K562 (cell line): ENCODE measurements at regions of chr1 and their contacts with region 1.

Region 1: GRCh38 chr1:100037927-100038659 is 68.3 kb downstream of the SLC35A3 start:
- DNase-seq: peak; percentile 88 to 93 (median 91)
- ATAC-seq: peak; percentile 88
- H3K4me3 ChIP-seq: peak overlapping the region; percentile 80
- H3K27ac ChIP-seq: peak overlapping the region; percentile 98
- H3K4me1 ChIP-seq: peaks cover 4 to 11% of the 10 kb centered on the region in 2 experiments; a peak in 4 of 5 replicates
- H3K27me3 ChIP-seq: no peaks in the 10 kb centered on the region
- CTCF ChIP-seq: no peak
- EP300 ChIP-seq: peak; percentile 26; the same call in 1 of the 2 replicates
- POLR2A ChIP-seq: peak; percentile 95
- RAD21 ChIP-seq: no peak

Region 2: GRCh38 chr1:99771513-99771918 is 266.6 kb before region 1 on chr1:
- CTCF ChIA-PET with region 1: no interaction called
- POLR2A ChIA-PET with region 1: no interaction called
- in situ Hi-C with region 1: no loop called
- intact Hi-C with region 1: loop called (anchors 2 kb)
- DNase-seq: peak; percentile 38 to 87 (median 47)
- ATAC-seq: peak; percentile 28
- H3K4me3 ChIP-seq: no peak overlapping the region
- H3K27ac ChIP-seq: peak overlapping the region; percentile 70
- H3K4me1 ChIP-seq: peaks cover 20 to 46% of the 10 kb centered on the region in 2 experiments
- H3K27me3 ChIP-seq: no peaks in the 10 kb centered on the region
- CTCF ChIP-seq: no peak
- EP300 ChIP-seq: peak; percentile 95
- POLR2A ChIP-seq: no peak
- RAD21 ChIP-seq: no peak

Region 3: GRCh38 chr1:99814373-99814900 is 223.7 kb before region 1 on chr1:
- CTCF ChIA-PET with region 1: no interaction called
- POLR2A ChIA-PET with region 1: interaction called, 3 read pairs
- in situ Hi-C with region 1: loop called (anchors 5 kb)
- intact Hi-C with region 1: no loop called
- DNase-seq: no peak
- ATAC-seq: peak; percentile 27; the same call in 1 of the 3 replicates
- H3K4me3 ChIP-seq: no peak overlapping the region
- H3K27ac ChIP-seq: no peak overlapping the region
- H3K4me1 ChIP-seq: peaks cover 0 to 3% of the 10 kb centered on the region in 2 experiments; a peak in 1 of 5 replicates
- H3K27me3 ChIP-seq: no peaks in the 10 kb centered on the region
- CTCF ChIP-seq: no peak
- EP300 ChIP-seq: no peak
- POLR2A ChIP-seq: no peak
- RAD21 ChIP-seq: no peak

Region 4: DNA sequence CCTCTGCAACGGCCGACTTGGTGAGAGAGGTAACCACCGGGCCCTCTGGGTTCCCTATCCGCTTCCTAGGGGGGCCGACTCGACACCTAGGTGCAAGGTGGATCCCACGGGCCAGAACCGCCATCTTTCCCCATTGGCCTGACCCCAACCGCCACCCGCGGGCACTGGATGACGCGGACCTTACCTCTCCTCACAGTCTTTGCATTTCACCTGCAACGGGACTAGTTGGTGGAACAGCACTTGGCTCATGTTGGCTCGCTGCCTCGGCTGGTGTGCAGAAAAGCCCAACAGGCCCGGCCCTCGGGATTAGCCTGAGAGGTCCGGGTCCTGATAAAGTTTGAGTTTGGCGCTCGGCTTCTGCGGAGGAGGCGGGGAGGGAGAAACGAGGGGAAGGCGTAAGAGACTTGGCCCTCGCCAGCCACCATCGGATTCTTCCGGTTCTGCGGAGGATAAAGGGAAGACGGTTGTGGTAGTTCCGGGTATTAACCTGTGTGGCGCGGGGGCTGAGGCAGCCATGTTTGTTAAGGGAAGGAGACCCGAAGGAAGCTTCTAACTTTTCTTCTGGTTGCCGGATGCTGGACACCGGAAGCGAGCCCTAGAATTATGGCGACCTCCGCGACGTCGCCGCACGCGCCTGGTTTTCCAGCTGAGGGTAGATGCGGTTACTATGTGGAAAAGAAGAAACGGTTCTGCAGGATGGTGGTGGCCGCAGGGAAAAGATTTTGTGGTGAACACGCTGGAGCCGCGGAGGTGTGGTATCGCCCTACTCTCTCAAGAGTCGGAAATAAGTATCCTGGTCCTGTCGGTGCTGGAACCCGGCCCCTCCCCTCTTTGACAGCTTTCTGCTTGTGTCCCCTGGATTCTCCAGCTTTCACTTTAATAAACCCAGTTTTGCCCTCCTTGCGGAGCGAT is 94.7 kb after region 1 on chr1 and contains the starts of genes SASS6 and TRMT13:
- CTCF ChIA-PET with region 1: no interaction called
- POLR2A ChIA-PET with region 1: no interaction called
- in situ Hi-C with region 1: no loop called
- intact Hi-C with region 1: loop called (anchors 2 kb)
- DNase-seq: peak; percentile 85 to 99 (median 88)
- ATAC-seq: peak; percentile 90
- H3K4me3 ChIP-seq: peak within 1 kb of the TSS; percentile 51
- H3K27ac ChIP-seq: peak within 1 kb of the TSS; percentile 79
- H3K4me1 ChIP-seq: peaks cover 3 to 10% of the 10 kb centered on the region in 2 experiments; a peak in 2 of 5 replicates
- H3K27me3 ChIP-seq: no peaks in the 10 kb centered on the region
- CTCF ChIP-seq: no peak
- EP300 ChIP-seq: peak; percentile 79
- POLR2A ChIP-seq: peak; percentile 84
- RAD21 ChIP-seq: no peak; a peak in 1 of 4 replicates
- polyA plus RNA-seq, gene SASS6: 14.7 to 16.4 TPM
- polyA plus RNA-seq, gene TRMT13: 24.2 to 24.3 TPM

Region 5: GRCh38 chr1:100292711-100293110 is 254.6 kb after region 1 on chr1:
- CTCF ChIA-PET with region 1: no interaction called
- POLR2A ChIA-PET with region 1: no interaction called
- in situ Hi-C with region 1: no loop called
- intact Hi-C with region 1: no loop called
- DNase-seq: no peak
- ATAC-seq: no peak
- H3K4me3 ChIP-seq: no peak overlapping the region
- H3K27ac ChIP-seq: no peak overlapping the region
- H3K4me1 ChIP-seq: no peaks in the 10 kb centered on the region; a peak in 1 of 5 replicates
- H3K27me3 ChIP-seq: no peaks in the 10 kb centered on the region
- CTCF ChIP-seq: no peak
- EP300 ChIP-seq: no peak
- POLR2A ChIP-seq: no peak
- RAD21 ChIP-seq: no peak

Region 6: DNA sequence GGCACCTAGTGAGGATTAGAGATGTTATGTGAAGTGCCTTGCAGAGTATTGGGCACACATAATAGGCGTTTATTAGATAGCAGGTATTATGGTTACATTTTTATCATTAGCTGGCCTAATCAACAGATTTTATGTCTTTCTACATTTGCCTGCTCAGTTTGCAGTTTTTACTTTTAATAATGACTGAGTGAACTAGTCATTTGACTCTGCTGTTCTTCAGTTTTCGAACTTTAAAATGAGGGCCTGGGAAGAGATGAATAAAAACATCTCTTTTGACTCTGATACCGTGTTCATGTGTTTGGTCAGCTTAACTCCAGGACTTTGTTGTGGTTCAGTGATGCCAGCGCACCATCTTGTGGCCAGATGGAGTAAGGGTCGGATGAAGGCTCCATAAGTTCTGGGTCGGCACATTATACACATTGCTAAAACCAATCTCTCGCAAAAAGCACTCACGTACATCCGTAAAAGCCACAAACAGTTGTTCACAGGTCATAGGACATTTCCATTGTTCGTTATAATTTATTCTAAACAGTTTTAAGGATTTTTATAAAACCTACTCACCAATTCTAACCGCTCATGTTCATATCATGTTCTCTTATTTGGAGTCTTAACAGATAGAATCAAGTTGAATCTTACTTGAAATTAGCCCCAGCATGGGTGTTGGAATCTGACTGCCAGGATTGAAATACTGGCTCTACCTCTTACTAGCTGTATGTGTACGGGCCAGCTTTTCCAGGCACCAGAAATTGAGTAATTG is 421.4 kb after region 1 on chr1:
- CTCF ChIA-PET with region 1: no interaction called
- POLR2A ChIA-PET with region 1: no interaction called
- in situ Hi-C with region 1: no loop called
- intact Hi-C with region 1: loop called (anchors 1 kb)
- DNase-seq: peak in 3 of 4 experiments; percentile 38 to 76 (median 57)
- ATAC-seq: peak; percentile 89
- H3K4me3 ChIP-seq: no peak overlapping the region
- H3K27ac ChIP-seq: no peak overlapping the region
- H3K4me1 ChIP-seq: peaks cover 0 to 6% of the 10 kb centered on the region in 2 experiments; a peak in 3 of 5 replicates
- H3K27me3 ChIP-seq: no peaks in the 10 kb centered on the region
- CTCF ChIP-seq: peak; percentile 72 to 86 (median 84)
- EP300 ChIP-seq: no peak
- POLR2A ChIP-seq: no peak
- RAD21 ChIP-seq: peak; percentile 90 to 91